Astrocyte of the cerebellum (primary cell): ENCODE measurements at regions of chr11 and their contacts with region 1.

Region 1: DNA sequence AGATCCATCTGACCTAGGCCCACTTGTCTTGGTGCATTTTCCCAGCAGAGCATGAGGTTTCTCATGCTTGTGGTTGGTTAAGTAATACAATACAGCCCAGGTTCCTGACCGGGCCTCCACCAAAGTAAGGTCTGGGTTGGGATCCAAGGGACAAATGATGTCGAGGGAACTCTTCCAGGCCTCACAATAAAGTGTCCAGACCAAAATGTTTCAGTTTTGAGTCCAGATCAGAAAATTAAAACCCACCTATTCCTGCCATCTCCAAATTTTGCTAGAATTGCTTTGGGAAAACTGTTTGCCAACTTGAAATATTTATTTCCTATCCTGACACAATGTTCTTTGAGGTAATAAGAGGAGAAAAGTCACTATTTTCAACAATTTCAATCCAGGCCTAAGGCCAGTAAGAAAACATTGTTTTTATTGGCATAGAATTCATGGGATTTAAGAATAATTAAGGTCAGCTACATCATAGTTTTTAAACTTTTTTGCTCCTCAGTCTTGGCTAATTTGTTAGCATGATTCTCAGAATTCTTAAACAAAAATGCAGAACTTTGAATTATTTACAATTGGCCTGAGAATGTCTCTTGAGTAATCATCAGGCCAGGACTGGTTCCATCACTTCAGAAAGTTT is 51.4 kb downstream of the ME3 start:
- DNase-seq: peak; percentile 70
- H3K4me3 ChIP-seq: no peak overlapping the region
- CTCF ChIP-seq: no peak

Region 2: DNA sequence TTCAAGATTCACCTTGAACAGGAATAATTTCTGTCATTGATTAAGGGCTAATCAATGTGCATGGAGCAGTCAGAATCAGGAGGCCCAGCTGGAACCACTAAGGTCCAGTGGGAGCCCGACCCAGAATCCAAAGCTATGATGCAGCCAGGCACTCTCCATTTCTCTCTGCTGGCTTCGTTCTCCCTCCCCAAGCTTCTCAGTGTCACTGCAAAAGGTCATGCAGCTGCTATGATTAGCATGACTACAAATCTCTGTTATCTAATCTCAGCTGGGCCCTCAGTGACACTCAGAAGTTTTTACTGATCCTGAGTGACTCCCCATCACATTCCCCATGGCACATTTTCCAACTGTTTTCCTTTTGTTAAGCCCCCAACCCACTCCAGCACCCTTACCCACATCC is 148.2 kb after region 1 on chr11:
- in situ Hi-C with region 1: no loop called
- DNase-seq: no peak
- H3K4me3 ChIP-seq: no peak overlapping the region
- CTCF ChIP-seq: no peak

Region 3: GRCh38 chr11:86802601-86803051 is 181.6 kb after region 1 on chr11:
- in situ Hi-C with region 1: loop called (anchors 10 kb)
- DNase-seq: peak; percentile 26
- H3K4me3 ChIP-seq: peak overlapping the region; percentile 72
- CTCF ChIP-seq: peak; percentile 68